CD8-positive, alpha-beta T cell (primary cell): ENCODE measurements at regions of chr16 and their contacts with region 1.

Region 1: DNA sequence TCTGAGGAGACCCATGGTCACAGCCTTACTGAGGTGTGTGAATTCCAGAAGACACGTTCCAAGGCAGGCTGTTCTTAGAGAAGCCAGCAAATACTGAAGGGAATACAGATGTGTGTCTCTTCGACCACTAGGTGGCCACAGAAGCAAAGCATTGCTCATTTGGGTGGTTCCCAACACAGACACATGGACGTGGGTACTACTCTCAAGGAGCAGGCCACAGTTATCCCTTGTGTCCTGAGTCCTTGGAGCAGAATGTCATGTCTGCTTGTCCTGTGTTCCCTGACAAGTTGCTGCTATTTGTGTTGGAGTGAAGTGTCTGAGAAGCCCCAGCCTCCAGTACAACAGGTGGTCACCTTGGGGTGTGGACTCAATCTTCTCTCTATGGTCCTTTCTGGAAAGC is 30.3 kb downstream of the HMOX2 start:
- DNase-seq: peak; percentile 28 to 88 (median 60)
- ATAC-seq: peak; percentile 34
- H3K4me3 ChIP-seq: no peak overlapping the region
- H3K4me3 Mint-ChIP-seq: peak overlapping the region; percentile 65
- H3K27ac ChIP-seq: peak overlapping the region; percentile 85 to 88
- H3K27ac Mint-ChIP-seq: peak overlapping the region; percentile 98
- H3K4me1 ChIP-seq: peaks cover 58% of the 10 kb centered on the region
- H3K4me1 Mint-ChIP-seq: peaks cover 59% of the 10 kb centered on the region
- H3K27me3 ChIP-seq: no peaks in the 10 kb centered on the region
- H3K27me3 Mint-ChIP-seq: no peaks in the 10 kb centered on the region
- CTCF ChIP-seq: peak; percentile 88

Region 2: DNA sequence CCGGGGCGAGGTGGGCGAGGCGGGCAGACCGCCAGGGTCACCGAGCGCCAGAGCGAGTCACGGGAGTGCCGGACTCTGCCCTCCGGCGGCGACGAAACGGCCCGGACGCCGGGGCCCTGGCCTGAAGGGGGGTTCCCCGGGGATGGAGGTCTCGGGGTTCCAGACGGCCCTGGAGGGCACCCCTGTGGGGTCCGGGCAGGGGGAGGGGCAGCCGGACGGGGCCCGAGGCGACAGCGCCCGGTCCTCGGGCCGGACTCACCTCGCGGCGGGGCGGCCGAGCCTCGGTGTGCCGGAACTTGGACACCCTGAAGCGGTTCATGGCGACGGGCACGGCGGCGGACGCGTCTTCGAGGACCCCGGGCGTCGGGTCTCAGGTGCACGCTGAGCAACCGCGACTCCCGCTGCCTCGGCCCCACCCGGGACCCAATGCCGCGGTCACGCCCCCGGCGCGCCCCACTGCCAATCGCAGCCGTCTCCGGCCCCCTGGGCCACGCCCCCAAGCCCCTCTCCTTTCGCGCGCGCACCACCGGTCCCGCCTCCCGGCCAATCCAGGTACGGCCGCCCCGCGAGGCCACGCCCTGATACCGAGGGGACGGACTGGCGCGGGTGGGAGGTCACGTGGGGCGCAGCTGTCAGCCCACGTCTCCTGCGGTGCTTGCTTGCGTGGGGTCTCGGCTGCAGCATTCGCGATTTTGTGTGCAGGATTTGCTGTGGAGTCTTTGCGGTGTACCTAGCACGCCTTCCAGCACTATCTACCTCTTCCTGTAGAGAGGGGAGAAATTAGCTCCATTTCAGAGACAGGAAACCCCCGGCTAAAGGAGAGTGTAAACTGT is 90.0 kb before region 1 on chr16 and contains the start of gene CORO7:
- CTCF ChIA-PET with region 1: no interaction called
- POLR2A ChIA-PET with region 1: interaction called, 10 read pairs
- intact Hi-C with region 1: loop called in 1 of 2 experiments (anchors 1 kb)
- DNase-seq: peak; percentile 98 to 100 (median 99)
- ATAC-seq: peak; percentile 78
- H3K4me3 ChIP-seq: peak within 1 kb of the TSS; percentile 51 to 60
- H3K4me3 Mint-ChIP-seq: peak within 1 kb of the TSS; percentile 97
- H3K27ac ChIP-seq: peak within 1 kb of the TSS; percentile 89 to 94
- H3K27ac Mint-ChIP-seq: peak within 1 kb of the TSS; percentile 99
- H3K4me1 ChIP-seq: peaks cover 44% of the 10 kb centered on the region
- H3K4me1 Mint-ChIP-seq: peaks cover 33% of the 10 kb centered on the region
- H3K27me3 ChIP-seq: no peaks in the 10 kb centered on the region
- H3K27me3 Mint-ChIP-seq: no peaks in the 10 kb centered on the region
- CTCF ChIP-seq: no peak
- total RNA-seq, gene CORO7: 950 to 991 TPM

Region 3: GRCh38 chr16:4487955-4488498 is 18.4 kb before region 1 on chr16:
- CTCF ChIA-PET with region 1: interaction called, 75 read pairs
- POLR2A ChIA-PET with region 1: interaction called, 52 read pairs
- intact Hi-C with region 1: loop called (anchors 1 kb)
- DNase-seq: peak in 2 of 9 experiments; percentile 29 to 57
- ATAC-seq: peak; percentile 41
- H3K4me3 ChIP-seq: peak overlapping the region in 1 of 2 experiments; percentile 42
- H3K4me3 Mint-ChIP-seq: peak overlapping the region; percentile 70
- H3K27ac ChIP-seq: peak overlapping the region; percentile 79 to 83
- H3K27ac Mint-ChIP-seq: peak overlapping the region; percentile 96
- H3K4me1 ChIP-seq: peaks cover 77% of the 10 kb centered on the region
- H3K4me1 Mint-ChIP-seq: peaks cover 60% of the 10 kb centered on the region
- H3K27me3 ChIP-seq: no peaks in the 10 kb centered on the region
- H3K27me3 Mint-ChIP-seq: no peaks in the 10 kb centered on the region
- CTCF ChIP-seq: no peak

Region 4: GRCh38 chr16:4529085-4530060 is 22.9 kb after region 1 on chr16:
- CTCF ChIA-PET with region 1: interaction called, 19 read pairs
- POLR2A ChIA-PET with region 1: interaction called, 9 read pairs
- intact Hi-C with region 1: loop called in 1 of 2 experiments (anchors 1 kb)
- DNase-seq: peak in 1 of 9 experiments; percentile 39
- ATAC-seq: peak; percentile 70
- H3K4me3 ChIP-seq: no peak overlapping the region
- H3K4me3 Mint-ChIP-seq: peak overlapping the region; percentile 75
- H3K27ac ChIP-seq: peak overlapping the region in 1 of 2 experiments; percentile 3
- H3K27ac Mint-ChIP-seq: peak overlapping the region; percentile 93
- H3K4me1 ChIP-seq: peaks cover 23% of the 10 kb centered on the region
- H3K4me1 Mint-ChIP-seq: peaks cover 54% of the 10 kb centered on the region
- H3K27me3 ChIP-seq: no peaks in the 10 kb centered on the region
- H3K27me3 Mint-ChIP-seq: no peaks in the 10 kb centered on the region
- CTCF ChIP-seq: no peak

Region 5: DNA sequence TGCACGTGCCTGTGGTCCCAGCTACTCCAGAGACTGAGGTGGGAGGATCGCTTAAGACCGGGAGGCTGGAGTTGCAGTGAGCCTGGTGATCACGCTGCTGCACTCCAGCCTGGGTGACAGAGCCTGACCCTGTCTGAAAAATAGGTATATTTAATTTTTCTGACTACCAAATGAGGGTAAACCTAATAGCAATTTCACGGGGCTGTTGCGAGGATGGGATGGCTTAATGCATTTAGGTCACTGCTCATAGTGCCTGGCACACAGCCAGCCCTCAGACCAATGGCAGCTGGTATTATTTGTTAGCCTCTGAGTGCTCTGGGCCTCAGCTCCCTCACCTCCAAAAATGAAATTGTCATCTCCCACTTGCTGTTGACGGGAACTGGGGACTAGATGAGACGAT is 38.0 kb after region 1 on chr16:
- CTCF ChIA-PET with region 1: interaction called, 115 read pairs
- POLR2A ChIA-PET with region 1: interaction called, 13 read pairs
- intact Hi-C with region 1: loop called (anchors 1 kb)
- DNase-seq: no peak
- ATAC-seq: no peak
- H3K4me3 ChIP-seq: no peak overlapping the region
- H3K4me3 Mint-ChIP-seq: no peak overlapping the region
- H3K27ac ChIP-seq: no peak overlapping the region
- H3K27ac Mint-ChIP-seq: no peak overlapping the region
- H3K4me1 ChIP-seq: peaks cover 9% of the 10 kb centered on the region
- H3K4me1 Mint-ChIP-seq: peaks cover 3% of the 10 kb centered on the region
- H3K27me3 ChIP-seq: no peaks in the 10 kb centered on the region
- H3K27me3 Mint-ChIP-seq: no peaks in the 10 kb centered on the region
- CTCF ChIP-seq: no peak

Region 6: DNA sequence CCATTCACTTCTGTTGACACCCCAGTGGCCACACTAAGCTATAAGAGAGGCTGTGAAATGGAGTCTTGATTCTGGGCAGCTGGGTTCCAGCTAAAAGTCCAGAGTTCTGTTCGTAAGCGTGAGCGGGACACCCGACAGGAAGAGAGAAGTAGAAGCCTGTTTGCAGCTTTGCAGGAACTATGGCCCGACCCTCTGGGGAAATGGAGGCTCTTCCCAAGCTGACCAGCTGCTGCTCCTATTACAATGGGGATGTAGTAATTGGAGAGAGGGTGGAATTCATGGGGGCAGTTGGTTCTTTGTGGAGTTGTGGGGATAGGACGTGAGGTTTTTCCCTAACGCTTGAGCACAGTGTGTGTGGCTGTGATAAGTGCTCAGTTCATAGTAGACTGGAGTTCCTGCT is 79.8 kb after region 1 on chr16:
- CTCF ChIA-PET with region 1: interaction called, 13 read pairs
- POLR2A ChIA-PET with region 1: no interaction called
- intact Hi-C with region 1: loop called (anchors 1 kb)
- DNase-seq: no peak
- ATAC-seq: no peak
- H3K4me3 ChIP-seq: no peak overlapping the region
- H3K4me3 Mint-ChIP-seq: no peak overlapping the region
- H3K27ac ChIP-seq: no peak overlapping the region
- H3K27ac Mint-ChIP-seq: no peak overlapping the region
- H3K4me1 ChIP-seq: peaks cover 3% of the 10 kb centered on the region
- H3K4me1 Mint-ChIP-seq: no peaks in the 10 kb centered on the region
- H3K27me3 ChIP-seq: no peaks in the 10 kb centered on the region
- H3K27me3 Mint-ChIP-seq: peaks cover 9% of the 10 kb centered on the region
- CTCF ChIP-seq: no peak

Region 7: DNA sequence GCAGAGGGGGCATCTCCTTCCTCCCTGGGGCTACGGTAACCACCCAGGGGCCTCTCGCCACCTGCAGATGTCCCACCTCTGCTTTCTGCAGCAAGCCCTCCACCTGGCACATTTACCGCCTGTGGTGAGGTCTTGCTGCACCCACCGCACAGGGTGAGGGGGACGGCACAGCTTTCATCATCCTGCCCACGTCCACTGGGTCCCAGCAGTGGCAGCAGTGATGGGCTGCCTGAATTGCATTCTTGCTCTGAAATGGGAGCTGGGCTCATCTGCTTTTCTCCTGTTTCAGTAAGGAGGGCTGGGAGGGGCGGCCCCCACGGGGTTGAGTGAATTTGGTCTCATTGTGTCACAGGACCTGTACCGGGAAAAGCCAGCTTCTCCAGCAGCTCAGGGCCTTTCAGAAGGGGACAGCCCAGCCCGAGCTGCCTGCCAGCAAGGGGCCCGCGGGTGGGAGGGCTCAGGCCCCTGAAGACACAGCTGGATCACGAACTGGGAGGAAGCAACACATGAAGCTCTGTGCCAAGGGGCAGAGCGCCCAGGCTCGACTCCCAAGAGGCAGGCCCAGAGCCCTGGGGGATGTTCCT is 240.6 kb after region 1 on chr16:
- CTCF ChIA-PET with region 1: no interaction called
- POLR2A ChIA-PET with region 1: no interaction called
- intact Hi-C with region 1: no loop called
- DNase-seq: no peak
- ATAC-seq: peak; percentile 29
- H3K4me3 ChIP-seq: no peak overlapping the region
- H3K4me3 Mint-ChIP-seq: no peak overlapping the region
- H3K27ac ChIP-seq: peak overlapping the region in 1 of 2 experiments; percentile 62
- H3K27ac Mint-ChIP-seq: no peak overlapping the region
- H3K4me1 ChIP-seq: peaks cover 35% of the 10 kb centered on the region
- H3K4me1 Mint-ChIP-seq: peaks cover 38% of the 10 kb centered on the region
- H3K27me3 ChIP-seq: no peaks in the 10 kb centered on the region
- H3K27me3 Mint-ChIP-seq: no peaks in the 10 kb centered on the region
- CTCF ChIP-seq: no peak

Region 8: DNA sequence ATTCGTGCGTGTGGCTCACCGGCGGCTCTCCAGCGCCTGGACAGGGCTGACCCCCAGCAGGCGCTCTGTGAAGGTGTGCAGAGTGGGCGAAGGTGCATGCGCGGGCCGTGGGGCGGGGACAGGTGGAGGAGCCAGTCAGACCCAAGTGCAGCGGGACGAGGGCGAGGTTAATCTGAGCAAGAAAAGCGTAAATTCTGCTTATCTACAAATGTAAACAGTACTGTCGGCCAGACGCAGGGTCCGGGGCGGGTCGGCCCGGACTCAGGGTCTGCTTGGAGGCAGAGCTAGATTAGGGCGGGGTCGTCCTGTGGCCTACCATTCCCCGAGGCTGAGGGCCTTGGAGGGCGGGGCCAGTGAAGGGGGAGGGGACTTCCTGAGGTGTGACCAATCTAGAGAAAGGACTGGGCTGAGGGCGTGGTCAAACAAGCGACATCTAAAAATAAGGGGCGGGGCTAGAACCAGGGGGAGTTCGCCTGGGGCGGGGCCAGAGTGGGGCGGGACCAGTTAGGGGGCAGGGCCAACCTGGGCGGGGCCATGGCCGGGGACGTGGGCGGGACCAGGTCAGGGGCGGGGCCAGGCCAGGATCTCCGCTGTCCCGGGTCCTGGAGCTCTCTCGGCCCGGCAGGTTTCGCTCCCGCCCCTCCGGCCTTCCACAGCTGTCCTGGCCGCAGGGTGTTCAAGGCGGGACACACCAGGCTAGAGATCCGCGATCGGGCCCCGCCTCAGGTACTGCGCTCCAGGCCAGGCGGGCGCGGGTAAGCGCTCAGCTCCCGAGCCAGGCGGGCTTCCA is 451.5 kb after region 1 on chr16 and contains the start of gene SEC14L5:
- CTCF ChIA-PET with region 1: no interaction called
- POLR2A ChIA-PET with region 1: no interaction called
- intact Hi-C with region 1: loop called in 1 of 2 experiments (anchors 5 kb)
- DNase-seq: peak; percentile 72 to 92 (median 87)
- ATAC-seq: peak; percentile 98
- H3K4me3 ChIP-seq: peak within 1 kb of the TSS; percentile 40 to 70
- H3K4me3 Mint-ChIP-seq: peak within 1 kb of the TSS; percentile 82
- H3K27ac ChIP-seq: no peak within 1 kb of the TSS
- H3K27ac Mint-ChIP-seq: no peak within 1 kb of the TSS
- H3K4me1 ChIP-seq: peaks cover 15% of the 10 kb centered on the region
- H3K4me1 Mint-ChIP-seq: peaks cover 20% of the 10 kb centered on the region
- H3K27me3 ChIP-seq: peaks cover 6 to 22% of the 10 kb centered on the region in 2 experiments
- H3K27me3 Mint-ChIP-seq: peaks cover 55% of the 10 kb centered on the region
- CTCF ChIP-seq: no peak
- total RNA-seq, gene SEC14L5: not detected

Region 9: GRCh38 chr16:5642436-5642835 is 1136.0 kb after region 1 on chr16:
- CTCF ChIA-PET with region 1: no interaction called
- POLR2A ChIA-PET with region 1: no interaction called
- intact Hi-C with region 1: no loop called
- DNase-seq: no peak
- ATAC-seq: no peak
- H3K4me3 ChIP-seq: no peak overlapping the region
- H3K4me3 Mint-ChIP-seq: no peak overlapping the region
- H3K27ac ChIP-seq: no peak overlapping the region
- H3K27ac Mint-ChIP-seq: no peak overlapping the region
- H3K4me1 ChIP-seq: no peaks in the 10 kb centered on the region
- H3K4me1 Mint-ChIP-seq: no peaks in the 10 kb centered on the region
- H3K27me3 ChIP-seq: no peaks in the 10 kb centered on the region
- H3K27me3 Mint-ChIP-seq: no peaks in the 10 kb centered on the region
- CTCF ChIP-seq: no peak